ENCODE measurements at regions of chr1 and their contacts with region 1.

Region 1: GRCh38 chr1:6171548-6172119 is 8.5 kb downstream of the CHD5 start:
- DNase-seq: no peak
- H3K4me3 ChIP-seq: no peak overlapping the region
- H3K27ac ChIP-seq: no peak overlapping the region
- H3K4me1 ChIP-seq: peaks cover 6% of the 10 kb centered on the region; the same call in 1 of the 2 replicates
- H3K27me3 ChIP-seq: no peaks in the 10 kb centered on the region; the same call in 1 of the 2 replicates
- CTCF ChIP-seq: peak; percentile 39; the same call in 1 of the 2 replicates

Region 2: GRCh38 chr1:6108937-6109614 is 62.6 kb before region 1 on chr1:
- CTCF ChIA-PET with region 1: no interaction called
- POLR2A ChIA-PET with region 1: no interaction called
- intact Hi-C with region 1: loop called (anchors 1 kb)
- DNase-seq: peak; percentile 34 to 62
- H3K4me3 ChIP-seq: no peak overlapping the region
- H3K27ac ChIP-seq: no peak overlapping the region
- H3K4me1 ChIP-seq: no peaks in the 10 kb centered on the region
- H3K27me3 ChIP-seq: 0 out of 2 replicates have a peak, but pooled peaks cover 6% of the 10 kb centered on the region
- CTCF ChIP-seq: peak; percentile 74

Region 3: GRCh38 chr1:6245086-6245868 is 73.6 kb after region 1 on chr1:
- CTCF ChIA-PET with region 1: no interaction called
- POLR2A ChIA-PET with region 1: no interaction called
- intact Hi-C with region 1: no loop called
- DNase-seq: peak; percentile 47 to 82
- H3K4me3 ChIP-seq: peak overlapping the region; percentile 42; the same call in 1 of the 2 replicates
- H3K27ac ChIP-seq: no peak overlapping the region
- H3K4me1 ChIP-seq: no peaks in the 10 kb centered on the region
- H3K27me3 ChIP-seq: peaks cover 17% of the 10 kb centered on the region
- CTCF ChIP-seq: peak; percentile 68

Region 4: DNA sequence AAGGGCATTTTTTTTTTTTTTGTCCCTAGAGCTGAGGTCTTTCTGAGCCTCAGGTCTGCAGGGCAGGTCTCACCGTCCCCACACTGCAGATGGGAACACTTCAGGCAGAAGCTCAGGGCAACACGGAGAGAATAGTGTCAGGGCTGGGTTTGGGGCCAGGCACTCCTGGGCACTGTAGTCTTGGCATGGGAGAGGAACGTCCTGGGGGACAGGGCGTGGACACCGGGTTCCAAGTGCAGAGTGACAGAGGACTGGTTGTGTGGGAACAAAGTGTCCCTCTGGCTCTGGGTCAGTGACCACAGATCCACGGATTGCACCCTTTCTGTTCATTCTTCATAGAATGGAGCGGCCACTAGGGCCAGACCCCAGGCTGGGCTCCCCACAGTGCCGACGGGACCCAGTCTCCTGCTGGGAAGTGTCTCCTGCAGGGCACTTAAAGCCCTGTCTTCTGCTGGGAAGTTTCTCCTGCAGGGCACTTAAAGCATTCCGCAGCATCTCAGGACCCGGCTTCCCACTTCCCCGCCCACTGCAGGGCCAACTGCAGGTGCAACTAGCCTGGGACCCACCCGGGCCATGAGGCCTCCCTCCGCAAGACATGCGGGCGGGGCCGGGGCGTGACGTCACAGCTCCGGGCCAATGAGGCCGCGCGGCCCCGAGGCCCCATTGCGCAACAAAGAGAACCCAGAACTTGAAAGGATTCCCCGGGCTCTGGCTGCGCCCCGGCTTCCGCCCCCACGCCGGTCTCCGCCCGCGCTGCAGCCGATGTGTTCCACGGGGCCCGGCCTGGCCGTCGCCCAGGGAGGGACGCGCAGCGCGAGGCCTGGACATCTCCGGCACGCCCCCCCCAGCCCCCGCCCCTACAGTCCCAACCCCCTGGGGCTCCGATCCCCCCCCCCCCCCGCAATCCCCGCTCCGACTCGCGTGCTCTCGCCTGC is 88.1 kb after region 1 on chr1:
- CTCF ChIA-PET with region 1: no interaction called
- POLR2A ChIA-PET with region 1: no interaction called
- intact Hi-C with region 1: no loop called
- DNase-seq: peak; percentile 55 to 79
- H3K4me3 ChIP-seq: peak overlapping the region; percentile 54; the same call in 1 of the 2 replicates
- H3K27ac ChIP-seq: no peak overlapping the region
- H3K4me1 ChIP-seq: no peaks in the 10 kb centered on the region
- H3K27me3 ChIP-seq: no peaks in the 10 kb centered on the region
- CTCF ChIP-seq: no peak

Region 5: GRCh38 chr1:6513320-6513801 is 341.7 kb after region 1 on chr1:
- CTCF ChIA-PET with region 1: no interaction called
- POLR2A ChIA-PET with region 1: interaction called, 14 read pairs
- intact Hi-C with region 1: no loop called
- DNase-seq: peak; percentile 54 to 75
- H3K4me3 ChIP-seq: no peak overlapping the region
- H3K27ac ChIP-seq: no peak overlapping the region
- H3K4me1 ChIP-seq: peaks cover 5% of the 10 kb centered on the region; the same call in 1 of the 2 replicates
- H3K27me3 ChIP-seq: no peaks in the 10 kb centered on the region
- CTCF ChIP-seq: no peak